CD8-positive, alpha-beta T cell (primary cell): ENCODE measurements at regions of chr2 and their contacts with region 1.

Region 1: GRCh38 chr2:135773917-135774316 is 32.3 kb downstream of the UBXN4 start:
- DNase-seq: no peak
- ATAC-seq: no peak
- H3K4me3 ChIP-seq: no peak overlapping the region
- H3K4me3 Mint-ChIP-seq: no peak overlapping the region
- H3K27ac ChIP-seq: no peak overlapping the region
- H3K27ac Mint-ChIP-seq: no peak overlapping the region
- H3K4me1 ChIP-seq: no peaks in the 10 kb centered on the region
- H3K4me1 Mint-ChIP-seq: no peaks in the 10 kb centered on the region
- H3K27me3 ChIP-seq: no peaks in the 10 kb centered on the region
- H3K27me3 Mint-ChIP-seq: no peaks in the 10 kb centered on the region
- CTCF ChIP-seq: no peak

Region 2: GRCh38 chr2:135694711-135695110 is 79.2 kb before region 1 on chr2:
- CTCF ChIA-PET with region 1: no interaction called
- POLR2A ChIA-PET with region 1: no interaction called
- intact Hi-C with region 1: no loop called
- DNase-seq: no peak
- ATAC-seq: no peak
- H3K4me3 ChIP-seq: no peak overlapping the region
- H3K4me3 Mint-ChIP-seq: no peak overlapping the region
- H3K27ac ChIP-seq: no peak overlapping the region
- H3K27ac Mint-ChIP-seq: no peak overlapping the region
- H3K4me1 ChIP-seq: peaks cover 11% of the 10 kb centered on the region
- H3K4me1 Mint-ChIP-seq: peaks cover 28% of the 10 kb centered on the region
- H3K27me3 ChIP-seq: no peaks in the 10 kb centered on the region
- H3K27me3 Mint-ChIP-seq: no peaks in the 10 kb centered on the region
- CTCF ChIP-seq: no peak

Region 3: GRCh38 chr2:135863233-135863632 is 89.3 kb after region 1 on chr2:
- CTCF ChIA-PET with region 1: no interaction called
- POLR2A ChIA-PET with region 1: no interaction called
- intact Hi-C with region 1: loop called in 1 of 2 experiments (anchors 10 kb)
- DNase-seq: no peak
- ATAC-seq: no peak
- H3K4me3 ChIP-seq: no peak overlapping the region
- H3K4me3 Mint-ChIP-seq: no peak overlapping the region
- H3K27ac ChIP-seq: no peak overlapping the region
- H3K27ac Mint-ChIP-seq: no peak overlapping the region
- H3K4me1 ChIP-seq: no peaks in the 10 kb centered on the region
- H3K4me1 Mint-ChIP-seq: peaks cover 13% of the 10 kb centered on the region
- H3K27me3 ChIP-seq: no peaks in the 10 kb centered on the region
- H3K27me3 Mint-ChIP-seq: no peaks in the 10 kb centered on the region
- CTCF ChIP-seq: no peak

Region 4: GRCh38 chr2:136086253-136087016 is 312.5 kb after region 1 on chr2:
- CTCF ChIA-PET with region 1: no interaction called
- POLR2A ChIA-PET with region 1: no interaction called
- intact Hi-C with region 1: no loop called
- DNase-seq: no peak
- ATAC-seq: no peak
- H3K4me3 ChIP-seq: no peak overlapping the region
- H3K4me3 Mint-ChIP-seq: no peak overlapping the region
- H3K27ac ChIP-seq: no peak overlapping the region
- H3K27ac Mint-ChIP-seq: no peak overlapping the region
- H3K4me1 ChIP-seq: no peaks in the 10 kb centered on the region
- H3K4me1 Mint-ChIP-seq: peaks cover 10% of the 10 kb centered on the region
- H3K27me3 ChIP-seq: no peaks in the 10 kb centered on the region
- H3K27me3 Mint-ChIP-seq: no peaks in the 10 kb centered on the region
- CTCF ChIP-seq: no peak